Breast epithelium (tissue), 4 donors: ENCODE measurements at regions of chr11 and their contacts with region 1.

Region 1: DNA sequence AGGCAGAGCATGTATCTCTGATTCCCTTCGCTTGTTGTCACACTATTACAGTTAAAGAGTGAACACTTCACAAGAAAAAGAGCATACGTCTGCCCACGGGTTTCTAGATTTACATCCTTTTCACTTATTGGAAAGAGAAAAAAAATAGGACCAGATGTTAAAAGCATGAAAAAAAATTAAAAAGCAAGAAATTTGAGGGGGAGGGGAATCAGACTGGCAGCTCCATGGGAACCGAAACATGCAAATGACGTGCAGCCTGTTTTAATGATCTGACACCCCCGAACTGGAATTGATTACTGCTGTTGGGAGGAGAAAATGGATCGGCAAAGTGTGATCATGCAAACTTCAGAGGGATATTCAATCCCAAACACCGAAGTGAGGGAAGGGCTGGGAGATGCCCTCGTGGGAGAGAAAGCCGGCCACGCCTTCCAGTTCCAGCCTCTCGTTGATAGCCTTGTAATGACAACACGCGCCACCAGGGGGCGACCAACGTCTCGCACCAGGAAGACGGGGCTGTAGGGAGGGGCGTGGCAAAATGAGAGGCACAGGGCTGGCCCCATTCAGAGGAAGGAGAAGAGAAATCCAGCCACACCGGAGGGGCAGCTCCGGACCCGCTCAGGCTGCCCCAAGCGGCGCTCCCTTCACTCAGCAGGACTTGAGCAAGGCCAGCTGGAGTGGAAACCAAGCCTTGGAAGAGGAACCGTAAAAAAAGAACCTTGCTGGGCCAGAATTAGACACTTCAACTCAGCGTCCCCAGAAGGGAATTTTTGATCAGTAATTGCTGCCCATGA is 53.8 kb upstream of the SYT13 start:
- DNase-seq: peak; percentile 86 to 90
- H3K4me3 ChIP-seq: peak overlapping the region; percentile 10 to 35 (median 22)
- H3K27ac ChIP-seq: no peak overlapping the region
- H3K4me1 ChIP-seq: no peaks in the 10 kb centered on the region
- H3K27me3 ChIP-seq: peaks cover 0 to 4% of the 10 kb centered on the region in 2 donors
- CTCF ChIP-seq: peak; percentile 85 to 93 (median 85)
- POLR2A ChIP-seq: no peak

Region 2: GRCh38 chr11:44936525-44936924 is 403.4 kb before region 1 on chr11:
- intact Hi-C with region 1: loop called (anchors 10 kb)
- DNase-seq: peak; percentile 76 to 86
- H3K4me3 ChIP-seq: no peak overlapping the region
- H3K27ac ChIP-seq: no peak overlapping the region
- H3K4me1 ChIP-seq: no peaks in the 10 kb centered on the region
- H3K27me3 ChIP-seq: no peaks in the 10 kb centered on the region
- CTCF ChIP-seq: peak; percentile 90 to 98 (median 96)
- POLR2A ChIP-seq: no peak

Region 3: GRCh38 chr11:45025716-45026492 is 314.0 kb before region 1 on chr11:
- intact Hi-C with region 1: no loop called
- DNase-seq: no peak
- H3K4me3 ChIP-seq: no peak overlapping the region
- H3K27ac ChIP-seq: peak overlapping the region; percentile 27 to 58
- H3K4me1 ChIP-seq: peaks cover 9% of the 10 kb centered on the region in 2 donors
- H3K27me3 ChIP-seq: no peaks in the 10 kb centered on the region
- CTCF ChIP-seq: no peak
- POLR2A ChIP-seq: no peak